ENCODE measurements at regions of chr1 and their contacts with region 1.

Region 1: GRCh38 chr1:6784560-6785317 is 515 bp upstream of the CAMTA1 start:
- DNase-seq: peak; percentile 99
- ATAC-seq: peak; percentile 88
- H3K4me3 Mint-ChIP-seq: peak overlapping the region; percentile 75
- H3K27ac Mint-ChIP-seq: peak overlapping the region; percentile 78
- H3K4me1 Mint-ChIP-seq: peaks cover 42% of the 10 kb centered on the region
- H3K27me3 Mint-ChIP-seq: no peaks in the 10 kb centered on the region

Region 2: GRCh38 chr1:6026095-6026809 is 758.5 kb before region 1 on chr1:
- CTCF ChIA-PET with region 1: no interaction called
- POLR2A ChIA-PET with region 1: no interaction called
- intact Hi-C with region 1: loop called (anchors 2 to 10 kb)
- DNase-seq: peak; percentile 97
- ATAC-seq: peak; percentile 81
- H3K4me3 Mint-ChIP-seq: peak overlapping the region; percentile 97
- H3K27ac Mint-ChIP-seq: peak overlapping the region; percentile 97
- H3K4me1 Mint-ChIP-seq: peaks cover 40% of the 10 kb centered on the region
- H3K27me3 Mint-ChIP-seq: no peaks in the 10 kb centered on the region

Region 3: GRCh38 chr1:6393400-6394187 is 391.1 kb before region 1 on chr1 and contains the start of gene ACOT7:
- CTCF ChIA-PET with region 1: no interaction called
- POLR2A ChIA-PET with region 1: no interaction called
- intact Hi-C with region 1: loop called in 1 of 2 experiments (anchors 1 kb)
- DNase-seq: peak; percentile 97
- ATAC-seq: peak; percentile 91
- H3K4me3 Mint-ChIP-seq: peak within 1 kb of the TSS; percentile 83
- H3K27ac Mint-ChIP-seq: peak within 1 kb of the TSS; percentile 95
- H3K4me1 Mint-ChIP-seq: peaks cover 28% of the 10 kb centered on the region
- H3K27me3 Mint-ChIP-seq: no peaks in the 10 kb centered on the region
- total RNA-seq, gene ACOT7: 93.8 to 99.2 TPM

Region 4: GRCh38 chr1:6602669-6603237 is 182.0 kb before region 1 on chr1 and contains the start of gene KLHL21:
- CTCF ChIA-PET with region 1: no interaction called
- POLR2A ChIA-PET with region 1: no interaction called
- intact Hi-C with region 1: loop called (anchors 1 to 2 kb)
- DNase-seq: peak; percentile 93
- ATAC-seq: peak; percentile 45
- H3K4me3 Mint-ChIP-seq: peak within 1 kb of the TSS; percentile 97
- H3K27ac Mint-ChIP-seq: peak within 1 kb of the TSS; percentile 95
- H3K4me1 Mint-ChIP-seq: peaks cover 30% of the 10 kb centered on the region
- H3K27me3 Mint-ChIP-seq: no peaks in the 10 kb centered on the region
- total RNA-seq, gene KLHL21: 12.4 to 15.7 TPM

Region 5: GRCh38 chr1:6743189-6744101 is 41.3 kb before region 1 on chr1:
- CTCF ChIA-PET with region 1: no interaction called
- POLR2A ChIA-PET with region 1: interaction called, 4 read pairs
- intact Hi-C with region 1: loop called (anchors 1 to 2 kb)
- DNase-seq: peak; percentile 50
- ATAC-seq: peak; percentile 42
- H3K4me3 Mint-ChIP-seq: no peak overlapping the region
- H3K27ac Mint-ChIP-seq: no peak overlapping the region
- H3K4me1 Mint-ChIP-seq: peaks cover 16% of the 10 kb centered on the region
- H3K27me3 Mint-ChIP-seq: peaks cover 18% of the 10 kb centered on the region

Region 6: DNA sequence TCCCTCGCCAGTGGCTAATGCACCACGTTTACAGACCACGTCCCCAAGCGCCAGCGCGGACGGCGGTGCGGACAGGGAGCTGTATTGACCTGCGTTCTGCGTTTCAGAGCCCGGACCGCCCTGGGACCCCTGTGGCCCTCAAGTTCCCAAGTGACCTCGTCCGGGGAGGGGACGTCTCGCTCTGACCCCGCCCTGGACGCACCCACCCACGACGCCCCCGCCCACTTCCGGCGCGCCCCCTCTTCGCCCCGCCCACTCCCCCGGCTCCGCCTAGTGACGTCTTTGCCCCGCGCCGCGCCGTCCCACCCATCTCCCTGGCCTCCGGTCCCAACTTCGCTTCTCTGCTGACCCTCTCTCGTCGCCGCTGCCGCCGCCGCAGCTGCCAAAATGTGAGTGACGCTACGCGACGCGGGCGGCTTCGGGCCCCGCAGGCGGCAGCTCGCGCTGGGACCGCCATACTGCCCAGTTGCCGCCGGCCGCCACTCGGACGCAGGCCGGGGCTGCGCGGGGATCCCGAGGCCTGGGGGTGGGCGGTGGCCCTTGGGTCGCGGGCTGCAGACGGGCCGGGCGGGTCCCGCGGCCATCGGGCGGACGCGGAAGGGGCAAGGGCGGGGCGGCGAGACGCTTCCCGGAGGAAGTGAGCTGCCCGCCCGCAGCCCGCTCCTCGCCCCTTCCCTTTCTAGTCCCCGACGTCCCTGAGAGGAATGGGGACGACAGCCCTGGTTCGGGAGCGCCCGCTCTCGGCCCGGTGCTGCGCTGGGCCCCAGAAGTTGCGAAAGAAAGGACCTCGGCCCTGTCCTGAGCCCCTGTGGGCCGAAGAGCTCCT is 986.5 kb after region 1 on chr1 and contains the start of gene VAMP3:
- CTCF ChIA-PET with region 1: no interaction called
- POLR2A ChIA-PET with region 1: no interaction called
- intact Hi-C with region 1: loop called in 1 of 2 experiments (anchors 1 kb)
- DNase-seq: peak; percentile 94
- ATAC-seq: peak; percentile 90
- H3K4me3 Mint-ChIP-seq: peak within 1 kb of the TSS; percentile 80
- H3K27ac Mint-ChIP-seq: peak within 1 kb of the TSS; percentile 72
- H3K4me1 Mint-ChIP-seq: peaks cover 21% of the 10 kb centered on the region
- H3K27me3 Mint-ChIP-seq: peaks cover 6% of the 10 kb centered on the region
- total RNA-seq, gene VAMP3: 16.8 to 17.4 TPM